IMR-90 (cell line): ENCODE measurements at regions of chr15 and their contacts with region 1.

Region 1: DNA sequence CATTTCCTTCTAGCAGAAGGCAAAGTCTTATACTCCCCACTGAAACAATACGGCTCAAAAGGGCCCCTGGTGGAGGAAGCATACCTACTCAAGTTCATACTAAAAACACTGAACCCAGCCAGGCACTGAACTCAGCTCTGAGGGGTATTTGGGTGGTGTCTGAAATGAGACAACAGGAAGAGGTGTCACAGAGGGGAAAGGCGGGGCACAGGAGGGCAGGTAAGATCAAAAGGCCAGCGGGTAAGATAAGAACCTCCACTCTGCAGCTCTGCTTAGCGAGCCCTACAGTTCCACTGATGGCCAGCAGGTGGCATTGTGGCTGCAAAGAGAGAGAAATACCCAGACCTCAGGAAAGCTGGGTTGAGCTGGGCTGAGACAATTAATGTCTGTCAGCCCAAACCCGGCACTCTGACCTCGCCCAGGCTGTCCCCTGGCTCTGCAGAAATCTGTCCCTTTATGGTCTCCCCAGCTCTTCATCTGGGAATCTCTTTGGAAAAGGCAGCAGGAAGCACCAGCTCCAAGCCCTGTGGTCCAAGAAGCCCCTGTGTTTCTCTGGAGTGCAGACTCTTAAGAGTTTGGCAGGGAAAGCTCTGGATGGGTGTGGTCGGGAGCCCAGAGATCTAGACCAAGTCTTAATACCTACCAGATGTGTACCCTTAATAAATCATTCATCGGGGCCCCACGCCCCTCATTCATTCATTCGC is 8.4 kb downstream of the MFGE8 start:
- DNase-seq: peak; percentile 70
- ATAC-seq: peak; percentile 84
- H3K4me3 ChIP-seq: no peak overlapping the region
- H3K27ac ChIP-seq: no peak overlapping the region
- H3K4me1 ChIP-seq: peaks cover 18% of the 10 kb centered on the region
- H3K27me3 ChIP-seq: no peaks in the 10 kb centered on the region
- CTCF ChIP-seq: peak; percentile 92
- POLR2A ChIP-seq: no peak; the same call in 1 of the 2 replicates
- RAD21 ChIP-seq: peak; percentile 91

Region 2: GRCh38 chr15:88918738-88919137 is 14.0 kb after region 1 on chr15:
- CTCF ChIA-PET with region 1: interaction called, 13 read pairs
- POLR2A ChIA-PET with region 1: no interaction called
- dilution Hi-C with region 1: no loop called
- in situ Hi-C with region 1: no loop called
- intact Hi-C with region 1: no loop called
- DNase-seq: peak; percentile 99
- ATAC-seq: peak; percentile 96
- H3K4me3 ChIP-seq: no peak overlapping the region
- H3K27ac ChIP-seq: peak overlapping the region; percentile 39; the same call in 1 of the 2 replicates
- H3K4me1 ChIP-seq: peaks cover 8% of the 10 kb centered on the region
- H3K27me3 ChIP-seq: no peaks in the 10 kb centered on the region
- CTCF ChIP-seq: no peak
- POLR2A ChIP-seq: no peak
- RAD21 ChIP-seq: no peak

Region 3: GRCh38 chr15:89003865-89004725 is 99.3 kb after region 1 on chr15:
- CTCF ChIA-PET with region 1: interaction called, 37 read pairs
- POLR2A ChIA-PET with region 1: interaction called, 5 read pairs
- dilution Hi-C with region 1: loop called (anchors 25 kb)
- in situ Hi-C with region 1: no loop called
- intact Hi-C with region 1: loop called (anchors 1 kb)
- DNase-seq: peak; percentile 73
- ATAC-seq: peak; percentile 80
- H3K4me3 ChIP-seq: no peak overlapping the region
- H3K27ac ChIP-seq: no peak overlapping the region
- H3K4me1 ChIP-seq: peaks cover 13% of the 10 kb centered on the region
- H3K27me3 ChIP-seq: no peaks in the 10 kb centered on the region
- CTCF ChIP-seq: peak; percentile 70
- POLR2A ChIP-seq: no peak
- RAD21 ChIP-seq: peak; percentile 81

Region 4: GRCh38 chr15:89017370-89018066 is 112.7 kb after region 1 on chr15:
- CTCF ChIA-PET with region 1: interaction called, 9 read pairs
- POLR2A ChIA-PET with region 1: no interaction called
- dilution Hi-C with region 1: loop called (anchors 25 kb)
- in situ Hi-C with region 1: loop called (anchors 5 kb)
- intact Hi-C with region 1: loop called (anchors 1 kb)
- DNase-seq: peak; percentile 71
- ATAC-seq: peak; percentile 92
- H3K4me3 ChIP-seq: peak overlapping the region; percentile 22
- H3K27ac ChIP-seq: peak overlapping the region; percentile 6; the same call in 1 of the 2 replicates
- H3K4me1 ChIP-seq: peaks cover 9% of the 10 kb centered on the region
- H3K27me3 ChIP-seq: no peaks in the 10 kb centered on the region
- CTCF ChIP-seq: peak; percentile 88
- POLR2A ChIP-seq: no peak
- RAD21 ChIP-seq: peak; percentile 88

Region 5: DNA sequence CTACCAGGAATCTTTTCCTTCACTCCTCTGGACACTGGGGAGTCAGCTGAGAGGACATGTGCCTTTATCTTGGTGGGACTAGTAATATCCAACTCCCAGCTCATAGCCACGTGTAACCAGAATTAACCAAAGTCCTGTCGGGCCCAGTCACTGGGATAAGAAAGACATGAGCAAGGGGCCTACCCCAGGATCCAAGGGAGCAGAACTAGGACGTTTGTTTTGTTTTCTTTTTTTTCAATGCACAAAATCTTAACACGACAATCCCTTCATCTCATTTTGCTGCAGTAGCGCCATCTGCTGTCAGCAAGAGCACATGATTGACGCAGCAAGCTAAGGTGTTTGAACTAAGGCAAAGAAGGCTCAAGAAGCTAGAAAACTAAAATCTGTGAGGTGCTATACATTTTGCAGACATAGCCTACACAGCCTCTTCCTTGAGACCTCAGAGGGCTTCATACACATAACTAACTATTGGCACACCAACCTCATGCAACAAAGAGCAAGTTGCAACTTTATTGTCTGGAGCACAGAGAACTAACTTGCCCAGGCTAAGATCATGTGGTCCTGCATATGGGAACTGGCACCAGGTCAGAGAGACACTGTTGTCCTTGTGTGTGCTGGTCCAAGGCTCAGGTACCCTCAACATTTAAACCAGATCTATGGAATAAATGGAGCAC is 273.0 kb after region 1 on chr15:
- CTCF ChIA-PET with region 1: interaction called, 6 read pairs
- POLR2A ChIA-PET with region 1: no interaction called
- dilution Hi-C with region 1: no loop called
- in situ Hi-C with region 1: loop called (anchors 5 kb)
- intact Hi-C with region 1: loop called (anchors 1 kb)
- DNase-seq: peak; percentile 83
- ATAC-seq: peak; percentile 89
- H3K4me3 ChIP-seq: no peak overlapping the region
- H3K27ac ChIP-seq: 0 out of 2 replicates have a peak overlapping the region, but pooled peaks have one; percentile 8
- H3K4me1 ChIP-seq: peaks cover 3% of the 10 kb centered on the region; the same call in 1 of the 2 replicates
- H3K27me3 ChIP-seq: no peaks in the 10 kb centered on the region
- CTCF ChIP-seq: peak; percentile 92
- POLR2A ChIP-seq: no peak
- RAD21 ChIP-seq: peak; percentile 85

Region 6: DNA sequence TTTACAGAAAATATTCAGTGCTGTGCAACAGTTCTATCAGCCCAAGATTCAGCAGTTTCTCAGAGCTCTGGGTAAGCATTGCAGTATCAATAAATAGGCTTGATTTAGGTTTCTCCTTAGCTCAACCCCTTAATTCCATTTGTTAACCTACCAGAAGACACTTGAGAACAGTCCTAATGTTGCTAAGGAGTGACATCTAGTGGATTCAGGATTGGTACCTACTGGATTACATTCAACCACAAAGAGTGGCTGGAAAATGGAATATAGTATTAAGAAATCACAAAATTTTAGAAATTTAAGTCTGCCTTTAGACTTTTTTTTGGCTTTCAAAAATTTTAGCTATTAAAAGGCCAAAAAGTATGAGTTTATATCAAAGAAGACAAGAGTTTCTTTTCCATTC is 395.1 kb after region 1 on chr15:
- CTCF ChIA-PET with region 1: no interaction called
- POLR2A ChIA-PET with region 1: no interaction called
- dilution Hi-C with region 1: no loop called
- in situ Hi-C with region 1: no loop called
- intact Hi-C with region 1: loop called (anchors 10 kb)
- DNase-seq: peak; percentile 64
- ATAC-seq: peak; percentile 91
- H3K4me3 ChIP-seq: no peak overlapping the region
- H3K27ac ChIP-seq: no peak overlapping the region
- H3K4me1 ChIP-seq: no peaks in the 10 kb centered on the region
- H3K27me3 ChIP-seq: no peaks in the 10 kb centered on the region
- CTCF ChIP-seq: peak; percentile 54
- POLR2A ChIP-seq: no peak
- RAD21 ChIP-seq: peak; percentile 67